Esophagus muscularis mucosa (tissue), 4 donors: ENCODE measurements at regions of chr3 and their contacts with region 1.

Region 1: DNA sequence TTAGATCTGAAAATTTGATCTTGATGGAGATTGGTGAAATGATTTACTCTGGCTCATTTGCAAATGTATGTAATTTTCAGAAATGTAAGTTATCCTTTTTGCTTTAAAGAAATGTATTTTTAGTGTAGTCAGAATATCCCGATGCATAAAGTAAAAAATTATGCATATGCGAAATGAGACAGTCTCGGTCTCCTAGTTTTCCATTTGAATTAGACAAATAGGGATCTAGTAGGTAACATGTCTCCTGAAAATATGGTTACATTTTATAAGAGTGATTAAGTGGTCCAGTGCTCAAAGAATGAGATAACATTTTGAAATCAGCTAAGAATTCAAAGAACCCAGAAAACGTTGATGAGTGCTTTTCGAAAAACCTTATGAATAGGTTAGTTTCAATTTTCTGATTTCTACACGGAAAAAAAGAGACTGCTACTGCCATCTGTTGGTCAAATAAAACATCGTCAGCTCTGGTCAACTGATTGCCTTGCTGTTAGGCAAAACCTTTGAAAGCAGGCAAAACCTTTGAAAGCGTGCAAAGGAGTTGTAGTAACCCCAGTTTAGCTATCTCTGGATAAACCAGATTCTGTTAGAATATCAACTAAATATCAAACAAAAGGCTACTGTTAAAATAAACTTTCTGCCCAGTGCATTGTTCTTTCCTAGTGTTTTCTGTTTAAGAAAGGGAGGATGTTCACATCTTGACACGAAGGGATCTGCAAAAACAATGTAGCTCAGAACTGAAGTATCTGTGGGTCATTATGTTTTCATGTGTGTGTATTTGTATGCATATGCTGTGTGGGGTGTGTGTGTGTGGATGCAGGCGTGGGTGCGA is 59.3 kb upstream of the CHMP2B start:
- DNase-seq: no peak
- H3K4me3 ChIP-seq: peak overlapping the region; percentile 30 to 41 (median 33)
- H3K27ac ChIP-seq: no peak overlapping the region
- H3K4me1 ChIP-seq: peaks cover 0 to 4% (median 2%) of the 10 kb centered on the region in 4 donors
- H3K27me3 ChIP-seq: no peaks in the 10 kb centered on the region
- CTCF ChIP-seq: peak; percentile 37 to 74 (median 63)
- EP300 ChIP-seq: no peak
- POLR2A ChIP-seq: no peak

Region 2: DNA sequence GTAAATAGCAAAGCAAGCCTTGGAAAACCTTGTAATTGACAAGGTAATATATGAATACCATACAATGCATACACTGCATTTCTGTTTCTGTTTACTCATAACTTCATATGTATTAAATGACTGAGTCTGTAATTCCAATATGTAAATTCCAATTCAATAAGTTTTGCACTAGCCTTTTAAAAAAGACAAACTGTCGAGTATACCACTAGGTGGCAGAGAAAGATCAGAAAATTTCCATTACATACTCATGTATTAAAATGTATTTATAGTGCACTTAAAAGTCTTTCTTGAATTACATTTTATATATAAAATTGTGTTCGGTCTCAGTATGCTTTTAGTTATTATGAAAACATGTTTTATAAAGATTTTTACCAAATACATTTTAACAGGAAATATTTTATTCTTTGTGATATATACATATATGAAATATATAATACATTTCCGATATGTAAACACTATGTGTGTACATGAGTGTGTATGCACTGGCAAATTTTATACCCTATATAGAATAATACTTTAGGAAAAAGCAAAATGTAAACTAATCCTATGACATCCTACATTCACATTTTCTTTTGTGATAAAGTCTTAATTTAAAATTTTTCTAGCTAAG is 393.7 kb before region 1 on chr3:
- intact Hi-C with region 1: loop called (anchors 5 kb)
- DNase-seq: no peak
- H3K4me3 ChIP-seq: no peak overlapping the region
- H3K27ac ChIP-seq: no peak overlapping the region
- H3K4me1 ChIP-seq: no peaks in the 10 kb centered on the region
- H3K27me3 ChIP-seq: no peaks in the 10 kb centered on the region
- CTCF ChIP-seq: peak; percentile 37 to 60 (median 57)
- EP300 ChIP-seq: no peak
- POLR2A ChIP-seq: no peak

Region 3: DNA sequence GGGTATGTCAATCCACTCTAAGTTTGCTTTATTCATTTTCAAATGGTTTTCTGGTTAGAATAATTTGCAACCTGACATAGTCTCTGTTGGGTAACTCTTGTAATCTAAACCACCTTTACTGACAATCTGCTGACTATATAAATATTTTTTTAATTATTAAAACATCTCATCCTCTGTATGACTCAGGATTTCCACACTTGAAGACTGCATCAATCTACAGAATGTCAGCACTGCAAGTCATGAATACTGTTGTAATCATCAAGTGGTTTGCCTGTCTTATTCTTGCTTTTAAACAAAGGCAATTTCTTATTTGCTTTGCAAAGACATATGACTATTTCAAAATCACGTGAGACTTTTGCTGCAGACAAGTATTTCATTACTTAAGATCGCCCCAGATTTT is 219.0 kb before region 1 on chr3:
- intact Hi-C with region 1: no loop called
- DNase-seq: no peak
- H3K4me3 ChIP-seq: no peak overlapping the region
- H3K27ac ChIP-seq: no peak overlapping the region
- H3K4me1 ChIP-seq: peaks cover 0 to 16% (median 1%) of the 10 kb centered on the region in 4 donors
- H3K27me3 ChIP-seq: no peaks in the 10 kb centered on the region
- CTCF ChIP-seq: no peak
- EP300 ChIP-seq: no peak
- POLR2A ChIP-seq: no peak

Region 4: DNA sequence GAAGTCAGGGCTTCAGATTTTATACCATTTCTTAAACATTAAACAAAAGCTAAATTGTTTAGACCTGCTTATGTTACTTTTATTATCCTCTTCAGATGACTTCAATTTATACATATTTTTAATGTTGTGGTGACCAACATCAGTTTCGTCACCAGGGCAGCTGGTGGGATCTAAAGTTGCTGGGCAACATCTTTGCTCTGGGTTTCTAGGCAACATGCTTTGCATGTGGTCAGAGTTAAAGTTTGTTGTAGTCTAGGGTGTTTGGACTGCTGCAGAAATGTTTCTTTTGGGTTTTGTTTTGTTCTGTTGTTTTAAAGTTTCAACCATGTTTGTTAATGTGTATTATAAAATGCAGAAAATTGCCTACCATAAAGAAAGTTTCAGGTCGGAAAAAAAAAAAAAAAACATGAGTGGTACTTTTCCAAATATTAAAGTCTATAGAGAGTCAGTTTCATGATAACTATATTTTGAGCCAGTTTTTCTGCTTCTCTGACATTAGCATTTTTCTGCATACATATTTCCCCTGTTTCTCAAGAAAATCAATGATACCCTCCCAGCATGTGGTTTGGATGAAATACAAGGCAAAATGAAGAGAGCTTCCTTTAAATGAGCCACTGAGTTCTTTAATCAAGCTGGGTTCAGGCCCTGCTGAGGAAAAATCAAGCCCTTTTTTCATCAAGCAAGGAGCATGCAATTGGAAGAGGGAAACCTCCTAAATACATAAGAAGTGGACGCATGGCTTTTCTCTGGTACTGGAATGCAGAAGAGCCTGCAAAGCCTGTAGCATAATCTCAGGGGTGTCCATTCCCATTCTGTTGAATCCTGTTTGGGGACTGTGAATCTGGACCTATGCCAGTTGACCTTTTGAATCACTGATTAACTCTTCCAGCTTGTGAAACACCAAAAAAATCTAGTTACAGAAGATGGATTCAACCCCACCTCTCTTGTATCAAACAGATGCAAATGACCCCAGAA is 141.9 kb before region 1 on chr3:
- intact Hi-C with region 1: no loop called
- DNase-seq: no peak
- H3K4me3 ChIP-seq: no peak overlapping the region
- H3K27ac ChIP-seq: no peak overlapping the region
- H3K4me1 ChIP-seq: no peaks in the 10 kb centered on the region
- H3K27me3 ChIP-seq: no peaks in the 10 kb centered on the region
- CTCF ChIP-seq: no peak
- EP300 ChIP-seq: no peak
- POLR2A ChIP-seq: no peak